BJ (cell line): ENCODE measurements at regions of chr1 and their contacts with region 1.

Region 1: GRCh38 chr1:161305867-161306519 is 3.8 kb downstream of the MPZ start:
- DNase-seq: no peak
- H3K4me3 ChIP-seq: peak overlapping the region; percentile 67
- H3K27me3 ChIP-seq: 0 out of 2 replicates have a peak, but pooled peaks cover 1% of the 10 kb centered on the region
- CTCF ChIP-seq: peak; percentile 36

Region 2: GRCh38 chr1:161357073-161357472 is 51.1 kb after region 1 on chr1:
- CTCF ChIA-PET with region 1: no interaction called
- POLR2A ChIA-PET with region 1: interaction called, 16 read pairs
- DNase-seq: no peak
- H3K4me3 ChIP-seq: no peak overlapping the region
- H3K27me3 ChIP-seq: no peaks in the 10 kb centered on the region
- CTCF ChIP-seq: no peak